Activated naive CD4-positive, alpha-beta T cell treated with anti-CD3 and anti-CD28 coated beads for 36 hours (primary cell): ENCODE measurements at regions of chr12 and their contacts with region 1.

Region 1: DNA sequence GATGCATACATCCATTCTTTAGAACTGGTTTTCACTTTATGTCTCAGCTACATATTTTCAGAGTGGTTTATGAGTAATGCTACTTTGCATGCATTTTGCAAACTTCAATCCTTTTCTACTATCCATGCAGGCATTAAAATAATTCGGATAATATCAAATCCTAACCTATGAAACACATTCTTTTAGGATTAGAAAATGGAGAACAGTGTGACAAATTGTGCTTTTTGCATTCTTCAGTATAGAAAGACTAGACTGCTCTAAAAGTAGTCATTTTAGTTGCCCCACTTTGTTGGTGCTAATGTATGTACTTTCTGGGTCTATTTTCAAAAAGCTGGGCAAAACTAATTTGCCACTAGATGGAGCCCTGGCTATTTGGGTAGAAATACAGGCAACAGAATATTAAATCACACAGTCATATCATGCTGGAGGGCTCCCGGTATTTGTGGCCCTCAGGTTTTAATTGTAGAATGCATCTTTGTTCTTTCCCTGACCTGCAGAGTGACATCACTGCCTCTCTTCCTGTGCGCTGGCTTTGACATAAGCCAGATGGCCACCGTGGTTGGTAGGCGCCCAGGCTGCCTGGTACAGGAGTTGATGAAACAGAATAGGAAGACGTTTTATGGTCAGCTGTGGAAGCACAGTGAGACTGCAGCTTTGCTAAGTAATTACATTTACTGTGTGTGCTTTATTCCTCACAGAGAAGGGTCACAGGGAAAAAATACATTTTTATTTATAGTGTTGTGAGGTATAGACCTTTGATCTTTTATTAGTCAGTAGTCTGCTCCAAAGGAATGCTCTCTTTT is 28.1 kb downstream of the MSRB3 start:
- DNase-seq: peak; percentile 31
- H3K4me3 Mint-ChIP-seq: no peak overlapping the region
- H3K27ac Mint-ChIP-seq: no peak overlapping the region
- H3K4me1 Mint-ChIP-seq: peaks cover 4% of the 10 kb centered on the region
- H3K27me3 Mint-ChIP-seq: peaks cover 18% of the 10 kb centered on the region

Region 2: GRCh38 chr12:65986047-65986446 is 679.5 kb after region 1 on chr12:
- CTCF ChIA-PET with region 1: no interaction called
- intact Hi-C with region 1: loop called (anchors 2 kb)
- DNase-seq: no peak
- H3K4me3 Mint-ChIP-seq: no peak overlapping the region
- H3K27ac Mint-ChIP-seq: no peak overlapping the region
- H3K4me1 Mint-ChIP-seq: no peaks in the 10 kb centered on the region
- H3K27me3 Mint-ChIP-seq: peaks cover 5% of the 10 kb centered on the region